Aorta (tissue), 5 donors: ENCODE measurements at regions of chr10 and their contacts with region 1.

Region 1: DNA sequence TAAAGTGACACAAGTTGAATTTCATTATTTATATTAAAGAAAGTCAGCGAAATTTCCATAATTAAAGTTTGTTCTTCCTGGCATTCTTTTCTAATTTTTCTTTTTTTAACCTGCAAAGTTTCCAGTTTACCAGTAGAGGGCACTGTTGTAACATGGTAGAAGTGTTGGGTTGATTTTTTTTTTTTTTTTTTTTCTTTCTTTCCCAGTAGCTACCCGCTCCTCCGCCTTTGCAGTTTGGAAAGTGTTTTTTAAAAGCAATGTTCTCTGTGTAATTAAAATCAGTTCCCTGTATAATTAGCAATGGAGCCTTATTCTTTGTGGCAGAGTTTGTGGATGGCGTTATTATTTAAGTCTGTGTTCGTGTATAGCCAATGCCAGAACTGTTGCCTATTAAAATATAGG is 53.7 kb downstream of the TAF3 start:
- DNase-seq: no peak
- ATAC-seq: no peak
- H3K4me3 ChIP-seq: no peak overlapping the region
- H3K27ac ChIP-seq: no peak overlapping the region
- H3K4me1 ChIP-seq: peaks cover 0 to 2% of the 10 kb centered on the region in 2 donors
- H3K27me3 ChIP-seq: no peaks in the 10 kb centered on the region

Region 2: DNA sequence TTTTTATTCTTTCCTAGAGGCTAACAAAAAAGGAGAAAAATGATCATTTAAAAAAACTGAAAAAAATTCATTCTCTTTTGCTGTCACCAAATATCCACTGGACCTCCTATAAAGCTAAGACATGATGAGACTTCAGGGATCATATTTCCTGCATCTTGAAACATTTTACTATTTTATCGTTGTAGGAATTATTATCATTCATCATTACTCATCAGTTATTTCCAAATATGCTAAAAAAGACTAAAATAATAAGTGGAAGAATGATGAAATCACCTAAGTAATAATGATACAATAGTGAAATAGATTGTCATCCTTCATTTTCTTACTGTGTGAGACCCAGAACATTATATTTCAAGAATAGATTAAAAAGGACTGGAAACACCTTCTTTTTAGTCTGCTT is 25.5 kb before region 1 on chr10:
- intact Hi-C with region 1: no loop called
- DNase-seq: no peak
- ATAC-seq: no peak
- H3K4me3 ChIP-seq: no peak overlapping the region
- H3K27ac ChIP-seq: no peak overlapping the region
- H3K4me1 ChIP-seq: no peaks in the 10 kb centered on the region
- H3K27me3 ChIP-seq: no peaks in the 10 kb centered on the region

Region 3: GRCh38 chr10:9209105-9209798 is 1337.2 kb after region 1 on chr10:
- intact Hi-C with region 1: loop called (anchors 2 to 5 kb)
- DNase-seq: peak; percentile 61 to 77
- ATAC-seq: no peak
- H3K4me3 ChIP-seq: no peak overlapping the region
- H3K27ac ChIP-seq: no peak overlapping the region
- H3K4me1 ChIP-seq: no peaks in the 10 kb centered on the region
- H3K27me3 ChIP-seq: no peaks in the 10 kb centered on the region

Region 4: DNA sequence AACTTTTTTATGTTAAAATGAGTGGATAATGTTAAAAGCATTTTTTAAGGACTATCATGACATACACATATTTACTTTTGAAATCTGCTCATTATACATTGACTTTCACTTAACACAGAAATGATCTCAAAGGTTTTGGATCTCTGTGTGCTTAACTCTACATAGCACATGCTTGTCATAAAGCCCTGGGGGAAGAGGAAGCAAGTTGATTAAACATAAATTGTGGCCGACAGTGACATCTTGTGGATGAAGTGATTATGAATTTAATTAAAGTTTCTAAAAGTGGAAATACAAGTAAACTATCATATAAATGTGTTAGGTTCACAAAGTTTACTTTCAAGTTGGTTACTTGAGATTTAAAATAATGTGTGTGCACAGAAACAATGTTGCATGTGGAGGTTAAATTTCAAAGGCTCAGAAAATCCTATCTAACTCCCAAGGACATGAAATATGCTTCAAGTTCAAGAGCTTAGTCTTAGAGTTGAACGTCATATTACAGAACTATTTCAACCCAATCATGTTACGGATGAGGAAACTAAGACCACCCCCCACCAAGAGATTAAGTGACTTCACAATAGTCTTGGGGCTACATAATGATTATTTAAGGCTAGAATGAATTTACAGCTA is 1430.2 kb after region 1 on chr10:
- intact Hi-C with region 1: loop called in 1 of 2 experiments (anchors 5 kb)
- DNase-seq: no peak
- ATAC-seq: no peak
- H3K4me3 ChIP-seq: no peak overlapping the region
- H3K27ac ChIP-seq: no peak overlapping the region
- H3K4me1 ChIP-seq: no peaks in the 10 kb centered on the region
- H3K27me3 ChIP-seq: no peaks in the 10 kb centered on the region